GM12878 (cell line): ENCODE measurements at regions of chr3 and their contacts with region 1.

Region 1: DNA sequence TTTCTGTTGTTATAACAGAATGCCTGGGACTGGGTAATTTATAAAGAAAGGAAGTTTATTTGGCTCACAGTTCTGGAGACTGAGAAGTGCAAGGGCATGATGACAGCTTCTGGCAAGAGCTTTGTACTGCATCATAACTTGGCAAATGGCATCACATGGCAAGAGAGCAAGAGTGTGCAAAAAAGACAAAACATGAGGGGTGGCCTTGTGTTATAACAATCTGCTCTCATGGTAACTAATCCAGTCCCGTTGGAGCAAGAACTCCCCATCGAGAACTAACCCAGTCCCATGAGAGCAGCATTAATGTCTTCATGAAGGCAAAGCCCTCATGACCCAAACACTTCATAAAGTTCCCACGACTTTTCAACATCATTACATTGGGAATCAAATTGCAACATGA is 23.2 kb downstream of the SCN11A start:
- DNase-seq: no peak
- ATAC-seq: no peak
- H3K4me3 ChIP-seq: no peak overlapping the region
- H3K27ac ChIP-seq: no peak overlapping the region
- H3K4me1 ChIP-seq: no peaks in the 10 kb centered on the region
- H3K27me3 ChIP-seq: peaks cover 0 to 2% of the 10 kb centered on the region in 2 experiments; a peak in 1 of 4 replicates
- CTCF ChIP-seq: no peak
- EP300 ChIP-seq: no peak
- POLR2A ChIP-seq: no peak
- RAD21 ChIP-seq: no peak

Region 2: DNA sequence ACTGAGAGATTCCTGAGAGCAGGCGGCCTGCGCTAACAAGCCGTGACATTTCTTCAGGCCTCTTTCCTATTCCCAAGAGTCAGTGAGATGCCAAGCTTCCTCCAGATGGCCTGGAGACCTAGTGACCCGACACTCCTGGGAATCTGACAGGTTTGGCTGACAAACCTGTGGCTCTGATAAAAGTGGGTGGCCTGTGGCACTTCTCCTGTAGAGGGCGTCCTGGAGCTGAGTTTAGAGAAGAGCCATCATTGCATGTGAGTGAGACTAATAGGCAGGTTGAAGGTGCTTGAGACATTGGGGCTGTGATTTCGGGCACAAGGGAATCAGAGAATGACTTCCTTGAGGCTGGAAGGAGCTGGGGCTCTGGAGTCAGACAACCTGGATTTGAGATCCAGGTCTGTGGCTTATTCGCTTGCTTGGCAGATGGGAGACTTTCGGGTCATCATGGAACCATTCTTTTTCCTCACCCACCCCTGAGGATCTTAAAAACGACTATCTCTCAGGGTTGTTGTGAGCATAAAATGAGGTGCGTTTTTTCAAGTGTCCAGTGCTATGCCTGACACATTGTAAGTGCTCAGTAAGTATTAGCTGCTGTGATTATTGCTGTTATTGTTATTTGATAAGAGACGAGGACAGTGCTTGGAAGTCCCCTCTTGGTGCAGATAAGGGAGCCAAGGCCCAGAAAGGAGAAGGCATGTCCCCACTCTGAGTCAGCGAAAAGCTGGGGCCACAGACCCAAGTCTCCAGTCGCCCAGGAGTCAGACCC is 289.7 kb before region 1 on chr3:
- CTCF ChIA-PET with region 1: interaction called, 12 read pairs
- POLR2A ChIA-PET with region 1: no interaction called
- RAD21 ChIA-PET with region 1: interaction called, 4 read pairs
- SMC1A ChIA-PET with region 1: interaction called, 4 read pairs
- in situ Hi-C with region 1: no loop called
- intact Hi-C with region 1: loop called (anchors 1 kb)
- DNase-seq: no peak
- ATAC-seq: peak; percentile 65
- H3K4me3 ChIP-seq: no peak overlapping the region
- H3K27ac ChIP-seq: no peak overlapping the region
- H3K4me1 ChIP-seq: no peaks in the 10 kb centered on the region
- H3K27me3 ChIP-seq: peaks cover 0 to 3% of the 10 kb centered on the region in 2 experiments; a peak in 2 of 4 replicates
- CTCF ChIP-seq: peak; percentile 49 to 63 (median 60)
- EP300 ChIP-seq: no peak
- POLR2A ChIP-seq: no peak
- RAD21 ChIP-seq: peak; percentile 46

Region 3: DNA sequence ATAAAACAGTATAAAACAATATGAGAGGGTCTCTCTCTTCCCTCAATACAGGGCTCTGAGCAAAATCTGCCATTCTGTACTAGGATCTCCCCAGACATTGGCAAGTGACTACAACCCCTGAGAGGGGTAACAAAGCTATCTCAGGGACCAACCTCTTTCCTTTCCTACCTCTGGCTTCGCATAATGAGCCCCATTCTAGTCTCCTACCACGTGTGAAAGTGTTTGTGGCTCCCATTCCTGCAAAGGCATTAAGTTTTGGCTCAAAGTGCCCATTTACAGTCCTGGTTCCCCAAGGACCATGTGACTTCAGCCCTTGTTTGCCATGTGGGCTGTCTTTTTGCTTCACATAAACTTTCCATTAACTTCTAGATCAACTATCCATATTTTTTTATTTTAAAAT is 23.3 kb before region 1 on chr3:
- CTCF ChIA-PET with region 1: interaction called, 241 read pairs
- POLR2A ChIA-PET with region 1: interaction called, 4 read pairs
- RAD21 ChIA-PET with region 1: interaction called, 96 read pairs
- SMC1A ChIA-PET with region 1: interaction called, 145 read pairs
- in situ Hi-C with region 1: no loop called
- intact Hi-C with region 1: loop called (anchors 1 kb)
- DNase-seq: no peak
- ATAC-seq: no peak
- H3K4me3 ChIP-seq: no peak overlapping the region
- H3K27ac ChIP-seq: no peak overlapping the region
- H3K4me1 ChIP-seq: no peaks in the 10 kb centered on the region
- H3K27me3 ChIP-seq: no peaks in the 10 kb centered on the region
- CTCF ChIP-seq: no peak
- EP300 ChIP-seq: no peak
- POLR2A ChIP-seq: no peak
- RAD21 ChIP-seq: no peak

Region 4: DNA sequence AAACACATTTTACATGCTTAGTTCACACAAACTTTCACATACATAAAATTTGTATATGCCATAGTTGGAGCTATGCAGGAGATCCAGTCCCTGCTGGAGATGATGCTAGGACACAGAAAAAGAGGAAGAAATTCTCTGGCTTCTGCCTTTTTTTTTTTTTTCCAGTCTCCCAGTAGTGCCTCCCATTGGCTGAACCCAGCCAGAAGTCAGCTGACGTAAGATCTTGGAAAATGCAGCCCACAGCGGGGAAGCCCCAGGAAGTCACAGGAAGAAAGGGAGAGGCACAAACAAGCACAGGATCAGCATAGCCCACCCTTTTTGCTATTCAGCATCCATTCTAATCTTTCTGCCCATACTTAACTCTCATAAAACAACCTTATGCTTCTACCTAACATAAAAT is 15.3 kb before region 1 on chr3:
- CTCF ChIA-PET with region 1: interaction called, 39 read pairs
- POLR2A ChIA-PET with region 1: no interaction called
- RAD21 ChIA-PET with region 1: interaction called, 5 read pairs
- SMC1A ChIA-PET with region 1: interaction called, 8 read pairs
- in situ Hi-C with region 1: no loop called
- intact Hi-C with region 1: no loop called
- DNase-seq: no peak
- ATAC-seq: no peak
- H3K4me3 ChIP-seq: no peak overlapping the region
- H3K27ac ChIP-seq: no peak overlapping the region
- H3K4me1 ChIP-seq: no peaks in the 10 kb centered on the region
- H3K27me3 ChIP-seq: no peaks in the 10 kb centered on the region
- CTCF ChIP-seq: no peak
- EP300 ChIP-seq: no peak
- POLR2A ChIP-seq: no peak
- RAD21 ChIP-seq: no peak